GM12878 (cell line): ENCODE measurements at regions of chr7 and their contacts with region 1.

Region 1: DNA sequence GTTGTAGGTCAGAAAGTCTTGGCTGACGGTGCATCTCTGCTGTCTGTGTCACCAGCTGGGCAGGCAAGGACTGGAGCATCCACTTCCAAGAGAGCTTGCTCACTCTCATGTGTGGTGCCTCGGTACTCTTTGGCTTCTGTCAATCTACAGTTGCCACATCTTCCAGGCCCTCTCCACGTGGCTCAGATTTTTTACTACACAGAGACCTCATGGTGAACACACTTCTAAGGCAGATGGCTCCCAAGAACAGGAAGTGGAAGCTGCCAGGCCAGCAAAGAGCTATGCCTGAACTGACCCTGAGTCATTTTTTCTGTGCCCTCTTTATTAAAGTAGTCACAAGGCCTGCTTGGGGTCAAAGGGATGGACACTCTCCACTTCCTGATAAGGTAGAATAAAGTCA is 351.5 kb upstream of the AUTS2 start:
- DNase-seq: no peak
- ATAC-seq: no peak
- H3K4me3 ChIP-seq: no peak overlapping the region
- H3K27ac ChIP-seq: no peak overlapping the region
- H3K4me1 ChIP-seq: no peaks in the 10 kb centered on the region
- H3K27me3 ChIP-seq: no peaks in the 10 kb centered on the region
- CTCF ChIP-seq: no peak
- EP300 ChIP-seq: no peak
- POLR2A ChIP-seq: no peak
- RAD21 ChIP-seq: no peak

Region 2: GRCh38 chr7:69276011-69276729 is 29.4 kb after region 1 on chr7:
- CTCF ChIA-PET with region 1: no interaction called
- POLR2A ChIA-PET with region 1: no interaction called
- RAD21 ChIA-PET with region 1: no interaction called
- SMC1A ChIA-PET with region 1: no interaction called
- in situ Hi-C with region 1: no loop called
- intact Hi-C with region 1: no loop called
- DNase-seq: no peak
- ATAC-seq: no peak
- H3K4me3 ChIP-seq: no peak overlapping the region
- H3K27ac ChIP-seq: no peak overlapping the region
- H3K4me1 ChIP-seq: no peaks in the 10 kb centered on the region
- H3K27me3 ChIP-seq: no peaks in the 10 kb centered on the region
- CTCF ChIP-seq: no peak
- EP300 ChIP-seq: no peak
- POLR2A ChIP-seq: no peak
- RAD21 ChIP-seq: no peak

Region 3: DNA sequence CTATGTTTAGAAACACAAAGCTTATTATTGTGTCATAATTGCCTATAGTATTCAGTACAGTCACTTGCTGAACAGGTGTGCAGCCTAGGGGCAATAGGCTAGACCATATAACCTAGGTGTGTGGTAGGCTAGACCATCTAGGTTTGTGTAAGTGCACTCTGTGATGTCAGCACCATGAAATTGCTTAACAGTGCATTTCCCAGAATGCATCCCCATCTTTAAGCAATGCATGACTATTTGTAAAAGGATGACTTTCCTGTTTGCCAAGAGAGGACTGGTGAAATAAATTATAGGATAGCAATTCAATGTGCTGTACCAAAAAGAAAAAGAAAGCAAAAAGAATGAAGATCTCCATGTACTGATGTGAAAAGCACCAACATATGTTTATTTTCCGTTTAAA is 62.8 kb after region 1 on chr7:
- CTCF ChIA-PET with region 1: no interaction called
- POLR2A ChIA-PET with region 1: no interaction called
- RAD21 ChIA-PET with region 1: no interaction called
- SMC1A ChIA-PET with region 1: no interaction called
- in situ Hi-C with region 1: no loop called
- intact Hi-C with region 1: loop called (anchors 10 kb)
- DNase-seq: no peak
- ATAC-seq: no peak
- H3K4me3 ChIP-seq: no peak overlapping the region
- H3K27ac ChIP-seq: no peak overlapping the region
- H3K4me1 ChIP-seq: no peaks in the 10 kb centered on the region
- H3K27me3 ChIP-seq: no peaks in the 10 kb centered on the region
- CTCF ChIP-seq: no peak
- EP300 ChIP-seq: no peak
- POLR2A ChIP-seq: no peak
- RAD21 ChIP-seq: no peak